AG04449 (cell line): ENCODE measurements at regions of chr1 and their contacts with region 1.

Region 1: GRCh38 chr1:236103646-236104218 is 38.6 kb upstream of the GPR137B start:
- DNase-seq: no peak
- H3K4me3 ChIP-seq: no peak overlapping the region
- CTCF ChIP-seq: peak; percentile 56

Region 2: DNA sequence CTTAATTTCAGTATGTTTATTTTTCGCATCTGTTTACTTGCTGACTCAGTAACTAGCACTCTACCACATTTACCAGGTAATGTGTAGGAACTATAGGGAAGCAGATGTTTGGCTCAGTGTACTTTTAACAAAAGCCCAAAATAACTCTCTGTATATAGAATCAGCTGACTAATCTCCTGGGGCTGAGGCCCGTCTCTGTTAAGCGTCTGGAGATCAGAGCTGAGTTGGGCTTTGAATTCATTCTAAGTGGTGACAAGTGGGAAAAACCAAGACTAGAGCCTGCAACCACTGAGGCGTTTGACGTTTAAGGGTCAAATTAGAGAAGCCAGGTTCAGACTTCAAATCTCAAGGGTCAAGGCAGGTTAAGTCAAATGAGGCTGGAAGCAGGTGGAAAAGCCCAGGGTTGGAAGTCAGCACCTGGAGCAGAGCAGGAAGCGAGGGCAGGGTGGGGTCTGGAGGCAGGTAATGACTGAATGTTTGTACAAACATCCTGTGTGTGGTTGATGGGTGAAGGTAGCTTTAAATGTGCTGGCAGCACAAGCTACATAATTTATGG is 180.2 kb before region 1 on chr1:
- CTCF ChIA-PET with region 1: no interaction called
- POLR2A ChIA-PET with region 1: no interaction called
- DNase-seq: no peak
- H3K4me3 ChIP-seq: no peak overlapping the region
- CTCF ChIP-seq: no peak

Region 3: DNA sequence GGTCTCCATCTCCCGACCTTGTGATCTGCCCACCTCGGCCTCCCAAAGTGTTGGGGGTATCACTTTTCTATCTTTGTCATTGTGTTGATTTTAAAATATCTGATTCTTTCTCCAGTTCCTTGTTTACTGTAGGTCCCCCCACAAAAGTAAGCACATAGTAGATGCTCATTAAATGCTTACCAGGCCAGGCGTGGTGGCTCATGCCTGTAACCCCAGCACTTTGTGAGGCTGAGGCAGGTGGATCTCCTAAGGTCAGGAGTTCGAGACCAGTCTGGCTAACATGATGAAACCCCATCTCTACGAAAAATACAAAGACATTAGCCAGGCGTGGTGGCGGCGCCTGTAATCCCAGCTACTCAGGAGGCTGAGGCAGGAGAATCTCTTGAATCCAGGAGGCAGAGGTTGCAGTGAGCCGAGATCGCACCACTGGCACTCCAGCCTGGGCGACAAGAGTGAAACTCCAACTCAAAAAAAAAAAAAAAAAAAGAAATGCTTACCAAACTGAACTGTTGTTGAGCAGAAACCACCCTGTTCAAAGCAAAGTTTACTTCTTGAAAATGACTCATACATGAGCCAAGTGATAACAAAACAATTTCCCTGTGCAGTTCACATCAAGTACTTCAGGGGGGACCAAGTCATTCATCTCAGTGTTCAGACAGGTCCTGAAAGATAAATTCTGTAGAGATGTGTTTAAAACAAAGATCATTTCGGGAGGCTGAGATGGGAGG is 14.5 kb before region 1 on chr1:
- CTCF ChIA-PET with region 1: interaction called, 11 read pairs
- POLR2A ChIA-PET with region 1: no interaction called
- DNase-seq: no peak
- H3K4me3 ChIP-seq: no peak overlapping the region
- CTCF ChIP-seq: no peak

Region 4: GRCh38 chr1:236168716-236169429 is 65.1 kb after region 1 on chr1:
- CTCF ChIA-PET with region 1: no interaction called
- POLR2A ChIA-PET with region 1: no interaction called
- DNase-seq: no peak
- H3K4me3 ChIP-seq: no peak overlapping the region
- CTCF ChIP-seq: no peak

Region 5: DNA sequence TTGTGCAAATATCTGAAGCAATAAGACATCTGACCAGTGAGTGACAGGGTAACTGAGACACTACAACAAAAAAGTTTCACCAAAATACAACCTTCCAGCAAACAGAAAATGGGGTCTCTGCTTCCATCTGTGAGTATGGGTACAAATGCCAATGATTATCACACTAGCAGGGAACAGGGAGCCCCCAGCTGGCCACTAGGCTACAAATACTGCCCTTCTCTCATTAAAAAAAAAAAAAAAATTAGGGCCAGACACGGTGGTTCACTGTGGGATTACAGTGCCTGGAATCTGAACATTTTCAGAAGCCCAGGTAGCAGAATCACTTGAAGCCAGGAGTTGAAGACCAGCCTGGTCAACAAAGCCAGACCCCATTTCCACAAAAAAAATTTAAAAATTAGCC is 242.0 kb after region 1 on chr1:
- CTCF ChIA-PET with region 1: no interaction called
- POLR2A ChIA-PET with region 1: no interaction called
- DNase-seq: no peak
- H3K4me3 ChIP-seq: no peak overlapping the region
- CTCF ChIP-seq: no peak

Region 6: DNA sequence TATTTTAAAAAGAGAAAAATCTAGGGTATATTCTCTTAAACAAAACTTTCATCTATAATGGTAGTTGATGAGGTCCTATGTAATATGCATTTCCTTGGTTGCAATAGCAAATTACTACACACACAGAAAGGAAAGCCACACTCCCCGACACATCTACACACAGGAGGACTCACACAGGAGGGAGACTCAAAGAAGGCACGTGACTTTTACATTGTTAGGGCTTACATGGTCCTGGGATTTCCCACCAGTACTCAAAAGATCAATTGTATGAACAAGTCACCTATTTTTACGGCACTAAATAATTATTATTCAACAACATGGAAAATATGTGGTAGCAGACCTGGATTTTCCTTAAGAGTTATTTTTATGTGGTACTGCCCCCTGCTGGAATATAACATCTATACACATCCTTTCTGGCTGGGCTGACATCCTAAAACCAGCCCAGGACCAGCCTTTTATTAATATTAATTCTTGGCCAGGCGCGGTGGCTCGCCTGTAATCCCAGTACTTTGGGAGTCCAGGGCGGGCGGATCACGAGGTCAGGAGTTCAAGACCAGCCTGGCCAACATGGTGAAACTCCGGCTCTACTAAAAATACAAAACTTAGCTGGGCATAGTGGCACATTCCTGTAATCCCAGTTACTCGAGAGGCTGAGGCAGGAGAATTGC is 386.1 kb after region 1 on chr1:
- CTCF ChIA-PET with region 1: interaction called, 171 read pairs
- POLR2A ChIA-PET with region 1: no interaction called
- DNase-seq: no peak
- H3K4me3 ChIP-seq: no peak overlapping the region
- CTCF ChIP-seq: peak; percentile 38

Region 7: GRCh38 chr1:236526079-236526478 is 422.3 kb after region 1 on chr1:
- CTCF ChIA-PET with region 1: interaction called, 12 read pairs
- POLR2A ChIA-PET with region 1: no interaction called
- DNase-seq: no peak
- H3K4me3 ChIP-seq: no peak overlapping the region
- CTCF ChIP-seq: no peak

Region 8: DNA sequence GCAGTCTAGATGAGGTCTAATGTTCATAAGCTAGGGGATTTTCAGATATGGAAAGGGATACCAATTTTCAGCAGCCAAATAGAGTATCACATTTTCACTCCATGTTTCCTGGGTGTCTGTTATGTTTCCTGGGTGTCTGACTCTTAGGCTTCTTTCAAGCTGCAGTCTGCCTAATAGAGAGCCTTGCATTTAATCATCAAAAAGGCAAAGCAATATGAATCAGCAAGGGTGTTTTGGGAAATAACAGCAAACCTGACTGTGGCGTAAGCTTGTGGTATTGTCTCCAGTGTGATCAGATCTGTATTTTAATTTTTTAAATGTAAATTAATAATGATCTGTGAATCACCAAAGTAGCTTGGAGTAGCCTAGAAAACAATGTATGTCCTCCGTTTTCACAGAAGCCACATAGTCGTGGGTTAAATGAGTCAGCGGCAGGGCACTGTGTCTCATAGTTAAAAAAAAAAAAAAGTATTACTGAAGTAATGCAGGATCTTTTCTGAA is 430.5 kb after region 1 on chr1:
- CTCF ChIA-PET with region 1: interaction called, 16 read pairs
- POLR2A ChIA-PET with region 1: no interaction called
- DNase-seq: no peak
- H3K4me3 ChIP-seq: no peak overlapping the region
- CTCF ChIP-seq: no peak

Region 9: GRCh38 chr1:236543065-236543669 is 439.4 kb after region 1 on chr1:
- CTCF ChIA-PET with region 1: interaction called, 10 read pairs
- POLR2A ChIA-PET with region 1: no interaction called
- DNase-seq: no peak
- H3K4me3 ChIP-seq: no peak overlapping the region
- CTCF ChIP-seq: peak; percentile 7